ENCODE measurements at regions of chr20 and their contacts with region 1.

Region 1: GRCh38 chr20:13105864-13106457 is 97.2 kb downstream of the SPTLC3 start:
- DNase-seq: no peak
- H3K4me3 ChIP-seq: no peak overlapping the region
- H3K27ac ChIP-seq: no peak overlapping the region
- H3K4me1 ChIP-seq: no peaks in the 10 kb centered on the region
- H3K27me3 ChIP-seq: no peaks in the 10 kb centered on the region
- CTCF ChIP-seq: peak; percentile 67 to 70

Region 2: GRCh38 chr20:12925214-12925755 is 180.7 kb before region 1 on chr20:
- intact Hi-C with region 1: loop called (anchors 10 kb)
- DNase-seq: peak in 1 of 2 donors; percentile 30
- H3K4me3 ChIP-seq: no peak overlapping the region
- H3K27ac ChIP-seq: no peak overlapping the region
- H3K4me1 ChIP-seq: no peaks in the 10 kb centered on the region
- H3K27me3 ChIP-seq: no peaks in the 10 kb centered on the region
- CTCF ChIP-seq: peak; percentile 82 to 85

Region 3: GRCh38 chr20:12966468-12967341 is 139.3 kb before region 1 on chr20:
- intact Hi-C with region 1: loop called (anchors 5 kb)
- DNase-seq: no peak
- H3K4me3 ChIP-seq: no peak overlapping the region
- H3K27ac ChIP-seq: no peak overlapping the region
- H3K4me1 ChIP-seq: no peaks in the 10 kb centered on the region
- H3K27me3 ChIP-seq: no peaks in the 10 kb centered on the region
- CTCF ChIP-seq: peak; percentile 36 to 48